Ascending aorta (tissue), 2 donors: ENCODE measurements at regions of chrX and their contacts with region 1.

Region 1: DNA sequence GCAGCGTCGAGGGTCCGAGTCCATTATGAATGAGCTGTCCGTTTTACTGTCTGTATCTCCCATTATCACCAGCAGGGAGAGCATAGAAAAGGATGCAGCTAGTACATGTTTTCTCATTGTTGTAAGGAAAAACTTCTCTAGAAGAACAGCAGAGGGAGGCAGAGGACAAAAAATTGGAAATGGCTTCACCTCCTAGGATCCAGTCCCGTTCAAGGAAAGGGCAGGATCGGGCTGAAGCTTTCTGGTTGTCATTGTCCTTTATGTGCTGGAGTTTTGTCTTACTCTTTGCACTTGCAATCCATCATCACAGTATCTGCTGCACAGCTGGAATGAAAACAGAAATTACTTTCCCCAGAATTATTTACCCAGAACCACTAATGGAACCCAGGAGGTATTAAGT is 14.7 kb downstream of the NDP start:
- DNase-seq: no peak
- H3K4me3 ChIP-seq: no peak overlapping the region
- H3K27ac ChIP-seq: no peak overlapping the region
- H3K4me1 ChIP-seq: no peaks in the 10 kb centered on the region
- H3K27me3 ChIP-seq: no peaks in the 10 kb centered on the region
- CTCF ChIP-seq: peak; percentile 53 to 68 (median 63)

Region 2: GRCh38 chrX:44244008-44244407 is 285.5 kb after region 1 on chrX:
- intact Hi-C with region 1: loop called (anchors 1 kb)
- DNase-seq: no peak
- H3K4me3 ChIP-seq: no peak overlapping the region
- H3K27ac ChIP-seq: no peak overlapping the region
- H3K4me1 ChIP-seq: no peaks in the 10 kb centered on the region
- H3K27me3 ChIP-seq: no peaks in the 10 kb centered on the region
- CTCF ChIP-seq: peak in 1 of 3 experiments; percentile 45

Region 3: GRCh38 chrX:45186643-45187026 is 1228.1 kb after region 1 on chrX:
- intact Hi-C with region 1: loop called (anchors 2 kb)
- DNase-seq: no peak
- H3K4me3 ChIP-seq: peak overlapping the region; percentile 44 to 68
- H3K27ac ChIP-seq: no peak overlapping the region
- H3K4me1 ChIP-seq: no peaks in the 10 kb centered on the region
- H3K27me3 ChIP-seq: no peaks in the 10 kb centered on the region
- CTCF ChIP-seq: no peak